H1 (cell line): ENCODE measurements at regions of chr1 and their contacts with region 1.

Region 1: GRCh38 chr1:22416555-22417454 is 34.8 kb upstream of the ZBTB40 start:
- DNase-seq: peak; percentile 53 to 95
- H3K4me3 ChIP-seq: peak overlapping the region in 3 of 4 experiments; percentile 12 to 32 (median 26); a peak in 3 of 8 replicates
- H3K27ac ChIP-seq: no peak overlapping the region
- H3K4me1 ChIP-seq: peaks cover 3 to 12% (median 5%) of the 10 kb centered on the region in 4 experiments; a peak in 5 of 7 replicates
- H3K27me3 ChIP-seq: no peaks in the 10 kb centered on the region
- CTCF ChIP-seq: peak; percentile 91 to 99 (median 98)
- EP300 ChIP-seq: 0 out of 3 replicates have a peak, but pooled peaks of 1 of the 2 experiments have one; percentile 54
- POLR2A ChIP-seq: no peak
- RAD21 ChIP-seq: peak; percentile 98 to 100

Region 2: GRCh38 chr1:22131875-22132486 is 284.8 kb before region 1 on chr1:
- CTCF ChIA-PET with region 1: interaction called, 149 read pairs
- POLR2A ChIA-PET with region 1: interaction called, 4 read pairs
- DNase-seq: peak; percentile 43 to 91
- H3K4me3 ChIP-seq: no peak overlapping the region
- H3K27ac ChIP-seq: no peak overlapping the region
- H3K4me1 ChIP-seq: peaks cover 4 to 25% (median 17%) of the 10 kb centered on the region in 4 experiments
- H3K27me3 ChIP-seq: 0 out of 7 replicates have a peak, but pooled peaks cover 0 to 2% (median 0%) of the 10 kb centered on the region in 4 experiments
- CTCF ChIP-seq: peak in 2 of 3 experiments; percentile 96 to 97; a peak in 3 of 4 replicates
- EP300 ChIP-seq: 0 out of 3 replicates have a peak, but pooled peaks of 1 of the 2 experiments have one; percentile 14
- POLR2A ChIP-seq: no peak
- RAD21 ChIP-seq: peak; percentile 98 to 100

Region 3: DNA sequence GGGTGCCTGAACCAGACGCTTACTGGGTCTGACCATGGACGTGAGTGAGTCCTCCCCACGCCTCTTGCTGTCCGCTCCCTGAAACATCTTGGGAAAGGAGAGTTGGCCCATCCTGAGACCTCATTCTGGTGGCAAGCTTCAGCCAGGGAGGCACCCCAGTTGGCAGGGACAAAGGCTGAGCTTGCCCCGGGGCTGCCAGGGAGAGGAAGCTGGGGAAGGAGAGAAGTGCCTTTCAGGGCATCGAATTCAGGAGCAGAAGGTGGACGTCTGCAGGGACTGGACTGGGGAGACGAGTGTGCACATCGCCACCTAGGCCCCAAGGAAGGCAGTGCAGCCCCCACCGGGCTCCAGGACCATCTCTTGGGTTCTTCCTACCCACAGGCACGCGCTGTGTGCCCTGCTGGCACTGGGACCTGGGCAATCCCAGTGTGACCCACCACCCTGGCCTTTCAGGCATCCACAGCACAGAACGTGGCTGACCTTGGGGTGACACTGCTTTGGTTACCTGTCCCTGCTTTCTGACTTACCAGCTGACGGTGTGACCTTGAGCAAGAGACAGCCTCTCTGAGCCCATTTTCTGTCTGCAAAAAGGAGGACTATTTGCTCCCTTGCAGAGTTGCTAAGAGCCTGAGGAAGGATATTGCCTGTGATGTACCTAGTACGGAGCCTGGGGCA is 140.9 kb before region 1 on chr1:
- CTCF ChIA-PET with region 1: interaction called, 14 read pairs
- POLR2A ChIA-PET with region 1: no interaction called
- DNase-seq: peak; percentile 44 to 93
- H3K4me3 ChIP-seq: no peak overlapping the region
- H3K27ac ChIP-seq: no peak overlapping the region
- H3K4me1 ChIP-seq: peaks cover 2 to 15% (median 9%) of the 10 kb centered on the region in 4 experiments
- H3K27me3 ChIP-seq: peaks cover 0 to 3% (median 0%) of the 10 kb centered on the region in 4 experiments; a peak in 3 of 7 replicates
- CTCF ChIP-seq: peak; percentile 81 to 98 (median 95)
- EP300 ChIP-seq: no peak
- POLR2A ChIP-seq: no peak
- RAD21 ChIP-seq: peak; percentile 84 to 87

Region 4: DNA sequence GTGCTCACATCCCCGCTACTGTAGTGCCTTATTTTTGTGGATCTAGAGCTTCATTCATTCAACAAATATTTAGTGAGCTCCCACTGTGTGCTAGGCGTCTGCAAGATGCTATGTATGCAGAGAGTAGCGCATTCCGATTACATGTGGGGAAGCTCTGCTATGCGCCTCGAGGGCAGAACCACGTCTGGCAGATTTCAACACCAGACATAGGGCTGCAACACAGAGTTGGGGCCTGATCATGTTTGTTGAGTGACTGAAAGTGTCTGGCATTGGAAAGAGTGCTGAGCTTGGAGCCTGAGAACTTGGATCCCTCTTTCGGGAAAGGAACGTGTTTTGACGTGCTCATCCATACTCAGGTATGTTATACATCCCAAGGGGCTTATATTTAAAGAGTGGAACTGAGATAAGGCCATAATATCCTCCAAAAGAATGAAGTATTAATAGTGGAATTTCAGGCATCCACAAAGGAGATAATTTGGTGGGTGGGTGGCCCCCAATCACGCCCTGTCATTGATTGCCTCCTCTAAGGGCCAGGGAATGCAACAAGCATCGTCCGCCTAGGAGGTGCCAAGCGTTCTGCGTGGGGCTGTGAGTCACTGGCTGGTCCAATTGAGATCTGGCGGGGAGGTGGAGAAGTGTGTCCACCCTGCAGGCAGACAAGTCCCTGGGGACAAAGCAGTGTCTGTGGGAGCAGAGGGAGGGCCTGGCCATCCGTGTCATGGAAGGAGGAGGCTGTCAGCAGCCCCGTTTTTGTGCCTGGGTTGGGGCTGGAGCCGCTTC is 27.9 kb before region 1 on chr1:
- CTCF ChIA-PET with region 1: interaction called, 14 read pairs
- POLR2A ChIA-PET with region 1: no interaction called
- DNase-seq: no peak
- H3K4me3 ChIP-seq: no peak overlapping the region
- H3K27ac ChIP-seq: no peak overlapping the region
- H3K4me1 ChIP-seq: peaks cover 0 to 5% (median 2%) of the 10 kb centered on the region in 4 experiments; a peak in 2 of 7 replicates
- H3K27me3 ChIP-seq: no peaks in the 10 kb centered on the region
- CTCF ChIP-seq: no peak
- EP300 ChIP-seq: no peak
- POLR2A ChIP-seq: no peak
- RAD21 ChIP-seq: no peak

Region 5: GRCh38 chr1:22500471-22500870 is 83.7 kb after region 1 on chr1:
- CTCF ChIA-PET with region 1: interaction called, 16 read pairs
- POLR2A ChIA-PET with region 1: no interaction called
- DNase-seq: no peak
- H3K4me3 ChIP-seq: no peak overlapping the region
- H3K27ac ChIP-seq: no peak overlapping the region
- H3K4me1 ChIP-seq: peaks cover 0 to 4% (median 2%) of the 10 kb centered on the region in 4 experiments; a peak in 3 of 7 replicates
- H3K27me3 ChIP-seq: peaks cover 0 to 5% (median 1%) of the 10 kb centered on the region in 4 experiments; a peak in 4 of 7 replicates
- CTCF ChIP-seq: no peak
- EP300 ChIP-seq: no peak
- POLR2A ChIP-seq: no peak
- RAD21 ChIP-seq: no peak

Region 6: GRCh38 chr1:22553104-22553880 is 136.5 kb after region 1 on chr1:
- CTCF ChIA-PET with region 1: no interaction called
- POLR2A ChIA-PET with region 1: no interaction called
- DNase-seq: no peak
- H3K4me3 ChIP-seq: no peak overlapping the region
- H3K27ac ChIP-seq: no peak overlapping the region
- H3K4me1 ChIP-seq: peaks cover 0 to 36% (median 19%) of the 10 kb centered on the region in 4 experiments; a peak in 6 of 7 replicates
- H3K27me3 ChIP-seq: peaks cover 0 to 2% (median 0%) of the 10 kb centered on the region in 4 experiments; a peak in 2 of 7 replicates
- CTCF ChIP-seq: no peak
- EP300 ChIP-seq: no peak
- POLR2A ChIP-seq: no peak
- RAD21 ChIP-seq: no peak